Activated T-helper 2 cell treated with anti-CD3 and anti-CD28 coated beads, Interferon-gamma antibody, Interleukin-2, Interleukin-4, amounts not matched to agents 10 μg/mL and 5 μg/mL and 100 μg/mL, durations not matched to agents 14 hours and 24 hours and 36 hours (primary cell): ENCODE measurements at regions of chr17 and their contacts with region 1.

Region 1: DNA sequence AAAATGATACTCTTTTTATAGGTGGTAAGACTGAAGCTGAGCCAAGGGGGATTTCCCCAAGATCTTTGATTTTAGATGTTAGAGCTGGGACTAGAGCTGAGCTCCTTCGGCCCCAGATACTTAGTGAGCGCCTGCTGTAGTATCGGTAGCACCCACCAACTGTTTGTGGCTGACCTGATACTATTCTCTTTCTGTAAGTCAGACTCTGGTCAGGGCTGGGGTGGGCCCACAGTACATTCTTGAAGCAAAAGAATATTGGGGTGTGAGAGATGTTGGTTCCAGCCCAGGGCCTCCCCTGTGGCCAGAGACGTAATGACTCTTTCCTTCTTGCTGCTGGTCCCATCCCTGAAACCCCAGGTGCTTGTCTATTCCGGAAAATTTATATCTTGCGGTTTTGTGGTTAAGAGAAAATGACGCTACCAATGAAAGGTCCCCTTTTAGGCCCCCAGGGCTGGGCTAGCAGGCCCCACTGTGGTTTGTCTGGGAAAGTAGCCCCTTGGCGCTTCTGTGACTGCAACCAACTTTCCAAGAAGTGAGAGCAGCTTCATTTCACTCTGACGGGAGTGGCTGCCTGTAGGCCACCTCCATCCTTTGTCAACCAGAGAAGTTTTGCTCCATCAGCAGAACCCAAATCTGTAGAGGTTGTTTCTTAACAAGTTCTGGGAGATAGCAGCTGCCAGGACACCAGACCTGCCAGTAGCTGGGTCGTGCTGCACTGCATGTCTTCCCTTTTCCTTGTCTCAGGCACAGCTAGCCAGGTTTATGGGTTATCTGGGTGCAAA is 86.4 kb upstream of the LGALS9 start:
- DNase-seq: peak; percentile 63
- H3K4me3 Mint-ChIP-seq: peak overlapping the region; percentile 31
- H3K27ac Mint-ChIP-seq: peak overlapping the region; percentile 87
- H3K4me1 Mint-ChIP-seq: peaks cover 71% of the 10 kb centered on the region
- H3K27me3 Mint-ChIP-seq: peaks cover 2% of the 10 kb centered on the region

Region 2: GRCh38 chr17:27293898-27294688 is 250.4 kb before region 1 on chr17 and contains the start of gene WSB1:
- intact Hi-C with region 1: loop called (anchors 1 kb)
- DNase-seq: peak; percentile 89
- H3K4me3 Mint-ChIP-seq: peak within 1 kb of the TSS; percentile 97
- H3K27ac Mint-ChIP-seq: peak within 1 kb of the TSS; percentile 99
- H3K4me1 Mint-ChIP-seq: peaks cover 29% of the 10 kb centered on the region
- H3K27me3 Mint-ChIP-seq: no peaks in the 10 kb centered on the region
- total RNA-seq, gene WSB1: 165 and 170 TPM in 2 replicates

Region 3: DNA sequence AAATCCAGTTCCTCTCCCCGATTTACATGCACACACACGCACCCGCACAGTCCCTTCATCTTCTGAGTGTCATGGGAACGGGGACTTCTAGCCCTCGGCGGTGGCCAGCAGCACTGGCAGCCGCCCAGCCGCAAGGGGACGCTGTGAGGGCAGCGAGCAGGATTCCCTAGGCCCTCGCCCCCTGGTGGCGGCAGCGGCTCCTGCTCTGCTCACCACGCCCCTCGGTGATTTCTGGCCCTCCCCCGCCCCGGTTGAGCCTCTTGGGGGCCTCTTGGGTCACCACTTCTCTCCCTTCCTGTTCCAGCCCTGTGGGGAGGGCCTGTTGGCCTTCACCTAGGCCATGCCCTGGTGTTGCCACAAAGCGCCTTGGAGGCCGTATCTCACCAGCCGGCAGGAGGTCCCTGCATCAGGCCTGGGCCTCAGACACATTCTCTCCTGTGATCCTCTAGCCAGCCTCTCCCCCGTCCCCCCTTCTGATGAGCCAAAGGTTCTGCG is 163.5 kb before region 1 on chr17:
- intact Hi-C with region 1: loop called (anchors 10 kb)
- DNase-seq: peak; percentile 69
- H3K4me3 Mint-ChIP-seq: no peak overlapping the region
- H3K27ac Mint-ChIP-seq: no peak overlapping the region
- H3K4me1 Mint-ChIP-seq: peaks cover 6% of the 10 kb centered on the region
- H3K27me3 Mint-ChIP-seq: peaks cover 17% of the 10 kb centered on the region

Region 4: GRCh38 chr17:27473748-27474609 is 70.6 kb before region 1 on chr17:
- intact Hi-C with region 1: loop called (anchors 1 kb)
- DNase-seq: peak; percentile 74
- H3K4me3 Mint-ChIP-seq: peak overlapping the region; percentile 10
- H3K27ac Mint-ChIP-seq: peak overlapping the region; percentile 89
- H3K4me1 Mint-ChIP-seq: peaks cover 80% of the 10 kb centered on the region
- H3K27me3 Mint-ChIP-seq: no peaks in the 10 kb centered on the region

Region 5: DNA sequence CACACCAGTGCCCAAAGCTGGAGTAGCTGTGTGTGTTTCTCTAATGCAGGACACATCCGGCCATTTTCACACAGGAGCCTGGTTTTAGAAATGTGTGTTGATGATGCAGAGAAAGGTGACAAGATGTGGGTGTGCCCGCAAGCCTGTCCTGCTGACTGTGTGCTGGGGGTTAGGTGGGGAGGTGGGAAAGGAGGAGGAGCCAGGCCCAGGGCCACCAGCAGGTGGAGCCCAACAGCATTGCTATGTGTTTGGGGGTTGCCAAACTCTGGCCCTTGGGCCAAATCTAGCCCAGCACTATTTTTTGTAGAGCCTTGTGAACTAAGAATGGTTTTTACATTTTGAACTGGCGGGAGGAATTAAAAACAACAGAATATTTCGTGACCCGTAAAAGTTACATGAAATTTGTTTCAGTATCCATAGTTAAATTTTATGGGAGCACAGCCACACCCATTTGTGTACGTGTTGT is 24.7 kb after region 1 on chr17:
- intact Hi-C with region 1: loop called (anchors 1 kb)
- DNase-seq: peak; percentile 27
- H3K4me3 Mint-ChIP-seq: no peak overlapping the region
- H3K27ac Mint-ChIP-seq: peak overlapping the region; percentile 47
- H3K4me1 Mint-ChIP-seq: peaks cover 76% of the 10 kb centered on the region
- H3K27me3 Mint-ChIP-seq: no peaks in the 10 kb centered on the region

Region 6: DNA sequence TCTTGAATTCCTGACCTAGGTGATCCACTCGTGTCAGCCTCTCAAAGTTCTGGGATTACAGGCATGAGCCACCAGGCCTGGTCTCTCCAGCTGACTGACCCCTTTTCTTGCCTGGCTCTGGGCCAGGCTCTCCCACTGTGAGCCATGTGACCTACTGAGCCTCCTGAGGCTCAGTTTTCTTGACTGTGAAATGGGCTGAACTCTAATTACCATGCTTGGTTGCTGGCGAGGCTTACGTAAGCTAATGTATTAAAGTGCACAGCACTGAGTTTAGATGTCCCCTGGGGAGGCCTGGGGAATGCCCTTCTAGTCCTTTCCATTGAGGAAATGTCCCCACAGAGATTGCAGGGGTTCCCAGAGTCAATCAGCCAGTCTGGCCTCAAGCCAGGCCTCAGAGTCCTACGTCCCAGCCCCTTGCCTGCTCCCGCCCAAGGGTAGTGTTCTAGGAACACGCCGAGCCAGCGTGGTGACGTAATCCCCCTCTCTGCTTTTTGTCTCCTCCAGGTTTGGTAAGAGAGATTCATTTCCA is 40.7 kb after region 1 on chr17:
- intact Hi-C with region 1: no loop called
- DNase-seq: no peak
- H3K4me3 Mint-ChIP-seq: no peak overlapping the region
- H3K27ac Mint-ChIP-seq: no peak overlapping the region
- H3K4me1 Mint-ChIP-seq: peaks cover 10% of the 10 kb centered on the region
- H3K27me3 Mint-ChIP-seq: no peaks in the 10 kb centered on the region

Region 7: DNA sequence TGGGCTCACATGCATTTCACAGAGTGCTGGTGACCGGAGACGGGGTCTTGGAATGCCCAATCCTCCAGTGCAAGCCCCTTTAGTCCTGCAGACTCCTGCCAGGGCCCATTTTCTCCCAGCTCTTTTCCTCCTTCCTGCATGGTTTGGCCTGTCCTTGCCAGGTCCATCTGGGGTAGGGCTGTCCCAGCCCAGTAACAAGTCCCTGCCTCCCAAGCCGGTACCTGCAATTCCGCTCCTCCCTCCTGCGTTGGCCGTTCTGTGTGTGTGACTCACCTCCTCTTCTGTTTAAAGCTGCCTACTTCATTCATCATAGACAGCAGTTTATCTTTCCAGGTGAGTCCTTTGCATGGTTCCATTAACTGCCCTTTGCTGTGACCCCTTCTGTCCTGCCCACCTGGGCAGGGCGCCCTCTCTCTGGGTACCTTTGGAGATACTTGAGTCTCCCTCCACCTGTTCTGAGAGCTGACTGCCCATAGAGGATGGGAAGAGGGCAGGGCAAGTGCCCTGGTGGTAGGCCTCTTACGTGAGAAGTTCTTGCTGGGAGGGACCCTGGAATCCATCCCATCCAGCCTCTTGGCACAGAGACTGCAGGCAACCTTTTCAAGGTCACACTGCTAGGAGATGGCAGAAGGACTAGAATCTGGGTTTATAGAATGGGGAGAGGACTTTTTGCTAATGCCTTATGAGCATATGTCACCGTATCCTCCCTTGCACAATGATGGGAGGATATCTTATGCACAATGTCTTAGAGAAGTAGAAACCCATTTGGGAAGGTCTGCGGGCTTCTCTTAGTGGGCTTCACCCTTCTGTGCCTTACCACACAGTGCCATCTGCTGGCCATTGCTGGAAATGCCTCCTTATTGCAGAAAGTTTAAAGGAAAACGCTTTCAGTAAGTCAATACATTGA is 56.8 kb after region 1 on chr17:
- intact Hi-C with region 1: loop called (anchors 1 kb)
- DNase-seq: peak; percentile 67
- H3K4me3 Mint-ChIP-seq: no peak overlapping the region
- H3K27ac Mint-ChIP-seq: no peak overlapping the region
- H3K4me1 Mint-ChIP-seq: peaks cover 10% of the 10 kb centered on the region
- H3K27me3 Mint-ChIP-seq: no peaks in the 10 kb centered on the region